Right cardiac atrium (tissue), 5 donors: ENCODE measurements at regions of chr3 and their contacts with region 1.

Region 1: DNA sequence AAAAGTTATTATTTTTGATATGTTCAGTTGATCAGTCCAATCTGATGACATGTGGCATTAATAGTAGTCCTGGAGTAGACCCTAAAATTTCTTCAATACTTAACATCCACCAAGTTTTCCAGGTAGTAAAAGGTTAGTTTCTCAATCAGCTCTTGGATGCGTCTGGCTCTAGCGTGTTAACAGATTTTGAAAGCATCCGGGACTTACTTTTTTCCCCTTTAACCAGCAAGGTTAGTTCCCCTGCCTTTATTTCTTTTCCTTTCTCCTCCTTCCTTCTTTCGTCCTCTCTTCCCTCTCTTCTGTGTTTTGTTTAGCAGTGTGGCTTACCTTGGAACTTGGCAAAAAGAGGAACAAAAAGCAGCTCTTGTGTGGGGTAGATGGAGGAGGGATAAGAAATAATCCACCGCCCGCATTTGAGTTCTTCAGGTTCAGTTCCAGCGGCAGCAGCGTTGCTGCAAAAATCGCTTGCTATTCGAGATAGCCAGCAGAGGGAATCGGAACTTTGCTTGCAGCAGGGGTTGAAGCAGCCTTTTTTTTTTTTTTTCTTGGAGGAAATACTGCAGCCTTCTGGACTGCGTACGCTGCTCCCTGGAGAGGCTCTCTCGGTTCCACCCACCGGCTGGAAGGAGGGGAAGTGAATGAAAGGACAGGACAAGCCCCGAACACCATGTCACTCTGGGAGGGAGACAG is at the start of gene RBMS3:
- DNase-seq: peak; percentile 92 to 94 (median 93)
- ATAC-seq: peak; percentile 96
- H3K4me3 ChIP-seq: peak within 1 kb of the TSS; percentile 99
- H3K27ac ChIP-seq: peak within 1 kb of the TSS; percentile 98
- H3K4me1 ChIP-seq: peaks cover 4% of the 10 kb centered on the region
- H3K27me3 ChIP-seq: no peaks in the 10 kb centered on the region
- total RNA-seq, gene RBMS3: 51.4 to 66.7 (median 56.8) TPM

Region 2: GRCh38 chr3:29335438-29335837 is 54.9 kb after region 1 on chr3:
- intact Hi-C with region 1: loop called in 1 of 4 experiments (anchors 10 kb)
- DNase-seq: peak; percentile 77 to 86 (median 79)
- ATAC-seq: peak; percentile 97
- H3K4me3 ChIP-seq: peak overlapping the region; percentile 47
- H3K27ac ChIP-seq: peak overlapping the region; percentile 70
- H3K4me1 ChIP-seq: peaks cover 7% of the 10 kb centered on the region
- H3K27me3 ChIP-seq: no peaks in the 10 kb centered on the region

Region 3: GRCh38 chr3:29525254-29525881 is 244.8 kb after region 1 on chr3:
- intact Hi-C with region 1: loop called in 3 of 4 experiments (anchors 10 kb)
- DNase-seq: peak; percentile 57 to 86 (median 76)
- ATAC-seq: peak; percentile 94 to 96
- H3K4me3 ChIP-seq: no peak overlapping the region
- H3K27ac ChIP-seq: no peak overlapping the region
- H3K4me1 ChIP-seq: no peaks in the 10 kb centered on the region
- H3K27me3 ChIP-seq: no peaks in the 10 kb centered on the region

Region 4: GRCh38 chr3:29759411-29760225 is 479.1 kb after region 1 on chr3:
- intact Hi-C with region 1: loop called in 3 of 4 experiments (anchors 5 to 10 kb)
- DNase-seq: peak; percentile 28 to 47 (median 39)
- ATAC-seq: peak; percentile 71 to 72
- H3K4me3 ChIP-seq: peak overlapping the region; percentile 33
- H3K27ac ChIP-seq: peak overlapping the region; percentile 98
- H3K4me1 ChIP-seq: peaks cover 6% of the 10 kb centered on the region
- H3K27me3 ChIP-seq: no peaks in the 10 kb centered on the region